CD4-positive, alpha-beta memory T cell (primary cell): ENCODE measurements at regions of chr12 and their contacts with region 1.

Region 1: GRCh38 chr12:53295070-53295890 is at the start of gene PFDN5:
- DNase-seq: peak; percentile 87 to 93 (median 91)
- H3K4me3 ChIP-seq: peak within 1 kb of the TSS; percentile 63 to 94
- H3K4me3 Mint-ChIP-seq: peak within 1 kb of the TSS; percentile 98 to 100 (median 99)
- H3K27ac ChIP-seq: peak within 1 kb of the TSS; percentile 81
- H3K27ac Mint-ChIP-seq: peak within 1 kb of the TSS; percentile 97 to 100 (median 99)
- H3K4me1 ChIP-seq: peaks cover 49% of the 10 kb centered on the region
- H3K4me1 Mint-ChIP-seq: peaks cover 23 to 59% (median 44%) of the 10 kb centered on the region in 4 donors
- H3K27me3 ChIP-seq: no peaks in the 10 kb centered on the region
- H3K27me3 Mint-ChIP-seq: no peaks in the 10 kb centered on the region
- total RNA-seq, gene PFDN5: 717 to 718 TPM

Region 2: GRCh38 chr12:53054112-53054833 is 241.0 kb before region 1 on chr12:
- CTCF ChIA-PET with region 1: no interaction called
- POLR2A ChIA-PET with region 1: no interaction called
- intact Hi-C with region 1: loop called (anchors 2 kb)
- DNase-seq: peak; percentile 94 to 96 (median 94)
- H3K4me3 ChIP-seq: peak overlapping the region; percentile 76 to 87
- H3K4me3 Mint-ChIP-seq: peak overlapping the region; percentile 88 to 95 (median 92)
- H3K27ac ChIP-seq: peak overlapping the region; percentile 62
- H3K27ac Mint-ChIP-seq: peak overlapping the region; percentile 80 to 98 (median 93)
- H3K4me1 ChIP-seq: peaks cover 9% of the 10 kb centered on the region
- H3K4me1 Mint-ChIP-seq: peaks cover 4 to 18% (median 12%) of the 10 kb centered on the region in 4 donors
- H3K27me3 ChIP-seq: no peaks in the 10 kb centered on the region
- H3K27me3 Mint-ChIP-seq: no peaks in the 10 kb centered on the region

Region 3: DNA sequence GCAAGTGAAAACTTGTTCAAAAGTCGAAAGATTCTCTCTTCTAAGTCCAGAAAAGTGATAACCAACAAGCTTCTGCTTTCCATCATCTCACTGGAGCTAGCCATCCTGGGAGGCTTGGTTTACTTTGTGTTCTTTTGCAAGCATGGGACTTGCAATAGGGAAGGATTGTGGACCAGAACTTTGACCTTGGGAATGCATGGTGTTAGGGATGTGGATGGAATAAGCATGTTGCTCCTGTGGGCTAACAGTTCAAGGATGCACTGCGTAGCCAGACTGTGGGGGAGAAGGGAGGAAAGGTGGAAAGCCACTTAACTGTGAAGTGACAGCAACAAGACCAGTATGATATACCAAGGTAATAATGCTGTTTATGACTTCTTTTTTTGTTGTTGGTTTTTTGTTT is 163.4 kb before region 1 on chr12:
- CTCF ChIA-PET with region 1: no interaction called
- POLR2A ChIA-PET with region 1: no interaction called
- intact Hi-C with region 1: no loop called
- DNase-seq: no peak
- H3K4me3 ChIP-seq: no peak overlapping the region
- H3K4me3 Mint-ChIP-seq: no peak overlapping the region
- H3K27ac ChIP-seq: no peak overlapping the region
- H3K27ac Mint-ChIP-seq: no peak overlapping the region
- H3K4me1 ChIP-seq: no peaks in the 10 kb centered on the region
- H3K4me1 Mint-ChIP-seq: peaks cover 0 to 4% (median 0%) of the 10 kb centered on the region in 4 donors
- H3K27me3 ChIP-seq: no peaks in the 10 kb centered on the region
- H3K27me3 Mint-ChIP-seq: peaks cover 3 to 4% of the 10 kb centered on the region in 2 donors

Region 4: DNA sequence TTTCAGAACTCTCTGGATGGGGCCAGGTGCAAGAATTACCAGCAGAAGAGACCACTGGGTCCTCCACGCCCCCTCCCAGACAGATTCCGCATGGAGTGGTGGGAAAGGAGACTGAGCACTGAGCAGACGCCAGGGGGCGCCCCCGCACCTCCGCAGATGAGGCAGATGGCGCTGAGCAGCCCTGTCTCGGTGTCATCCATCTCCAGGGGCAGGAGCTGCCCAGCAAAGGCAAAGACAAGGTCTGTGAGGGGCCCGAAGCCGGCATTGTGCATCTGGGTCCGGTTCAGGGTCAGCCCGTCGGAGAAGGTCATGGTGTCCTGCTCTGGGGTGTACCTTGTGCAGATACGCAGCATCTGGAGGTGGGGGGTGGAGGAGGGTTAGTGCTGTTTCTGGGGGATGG is 81.9 kb before region 1 on chr12:
- CTCF ChIA-PET with region 1: interaction called, 339 read pairs
- POLR2A ChIA-PET with region 1: interaction called, 50 read pairs
- intact Hi-C with region 1: no loop called
- DNase-seq: peak; percentile 77 to 84 (median 78)
- H3K4me3 ChIP-seq: no peak overlapping the region
- H3K4me3 Mint-ChIP-seq: peak overlapping the region in 1 of 8 donors; percentile 41
- H3K27ac ChIP-seq: peak overlapping the region; percentile 36
- H3K27ac Mint-ChIP-seq: peak overlapping the region; percentile 46 to 97 (median 87)
- H3K4me1 ChIP-seq: peaks cover 84% of the 10 kb centered on the region
- H3K4me1 Mint-ChIP-seq: peaks cover 45 to 81% (median 68%) of the 10 kb centered on the region in 4 donors
- H3K27me3 ChIP-seq: no peaks in the 10 kb centered on the region
- H3K27me3 Mint-ChIP-seq: no peaks in the 10 kb centered on the region

Region 5: GRCh38 chr12:53251477-53252348 is 43.6 kb before region 1 on chr12:
- CTCF ChIA-PET with region 1: interaction called, 29 read pairs
- POLR2A ChIA-PET with region 1: interaction called, 11 read pairs
- intact Hi-C with region 1: loop called (anchors 1 kb)
- DNase-seq: peak; percentile 67 to 78 (median 71)
- H3K4me3 ChIP-seq: peak overlapping the region; percentile 73 to 92
- H3K4me3 Mint-ChIP-seq: peak overlapping the region; percentile 96 to 100 (median 98)
- H3K27ac ChIP-seq: peak overlapping the region; percentile 83
- H3K27ac Mint-ChIP-seq: peak overlapping the region; percentile 96 to 99 (median 98)
- H3K4me1 ChIP-seq: peaks cover 46% of the 10 kb centered on the region
- H3K4me1 Mint-ChIP-seq: peaks cover 23 to 52% (median 41%) of the 10 kb centered on the region in 4 donors
- H3K27me3 ChIP-seq: no peaks in the 10 kb centered on the region
- H3K27me3 Mint-ChIP-seq: no peaks in the 10 kb centered on the region

Region 6: DNA sequence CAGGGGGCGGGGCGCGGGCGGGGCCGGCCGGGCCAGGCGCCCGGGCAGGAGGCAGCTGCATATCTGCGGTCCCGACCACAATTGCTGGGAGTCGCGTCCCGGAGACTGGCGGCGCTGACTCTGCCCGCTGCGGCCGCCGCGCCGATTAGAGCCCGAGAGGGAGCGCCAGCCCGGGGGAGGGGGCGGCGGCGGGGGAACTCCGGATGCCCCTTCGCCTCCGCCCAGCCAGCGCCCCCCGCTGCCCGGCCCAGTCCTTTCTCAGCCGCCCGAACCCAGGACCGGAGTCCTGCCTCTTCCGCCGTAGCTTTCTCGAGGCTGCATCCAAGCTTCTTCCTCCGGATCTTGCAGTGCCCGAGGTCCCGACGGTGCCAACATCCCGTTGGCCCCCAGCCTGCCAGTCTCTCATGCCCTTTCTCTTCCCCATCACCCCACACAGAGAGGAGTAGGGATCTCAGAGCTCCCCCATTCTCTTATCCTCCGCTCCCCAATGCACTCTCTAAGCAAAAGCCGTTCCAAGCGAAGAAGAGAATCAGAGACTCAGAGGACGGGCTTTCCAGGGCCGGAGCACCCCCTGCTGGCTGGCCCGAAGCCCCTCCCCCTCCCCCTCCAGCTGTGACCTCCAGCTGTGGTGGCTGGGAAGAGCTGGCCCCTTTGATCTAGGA is 49.7 kb after region 1 on chr12:
- CTCF ChIA-PET with region 1: interaction called, 28 read pairs
- POLR2A ChIA-PET with region 1: interaction called, 8 read pairs
- intact Hi-C with region 1: no loop called
- DNase-seq: peak; percentile 62 to 66 (median 65)
- H3K4me3 ChIP-seq: peak overlapping the region in 1 of 2 donors; percentile 73
- H3K4me3 Mint-ChIP-seq: peak overlapping the region; percentile 94 to 99 (median 98)
- H3K27ac ChIP-seq: peak overlapping the region; percentile 44
- H3K27ac Mint-ChIP-seq: peak overlapping the region; percentile 68 to 97 (median 94)
- H3K4me1 ChIP-seq: peaks cover 7% of the 10 kb centered on the region
- H3K4me1 Mint-ChIP-seq: peaks cover 11 to 18% (median 14%) of the 10 kb centered on the region in 4 donors
- H3K27me3 ChIP-seq: no peaks in the 10 kb centered on the region
- H3K27me3 Mint-ChIP-seq: no peaks in the 10 kb centered on the region

Region 7: DNA sequence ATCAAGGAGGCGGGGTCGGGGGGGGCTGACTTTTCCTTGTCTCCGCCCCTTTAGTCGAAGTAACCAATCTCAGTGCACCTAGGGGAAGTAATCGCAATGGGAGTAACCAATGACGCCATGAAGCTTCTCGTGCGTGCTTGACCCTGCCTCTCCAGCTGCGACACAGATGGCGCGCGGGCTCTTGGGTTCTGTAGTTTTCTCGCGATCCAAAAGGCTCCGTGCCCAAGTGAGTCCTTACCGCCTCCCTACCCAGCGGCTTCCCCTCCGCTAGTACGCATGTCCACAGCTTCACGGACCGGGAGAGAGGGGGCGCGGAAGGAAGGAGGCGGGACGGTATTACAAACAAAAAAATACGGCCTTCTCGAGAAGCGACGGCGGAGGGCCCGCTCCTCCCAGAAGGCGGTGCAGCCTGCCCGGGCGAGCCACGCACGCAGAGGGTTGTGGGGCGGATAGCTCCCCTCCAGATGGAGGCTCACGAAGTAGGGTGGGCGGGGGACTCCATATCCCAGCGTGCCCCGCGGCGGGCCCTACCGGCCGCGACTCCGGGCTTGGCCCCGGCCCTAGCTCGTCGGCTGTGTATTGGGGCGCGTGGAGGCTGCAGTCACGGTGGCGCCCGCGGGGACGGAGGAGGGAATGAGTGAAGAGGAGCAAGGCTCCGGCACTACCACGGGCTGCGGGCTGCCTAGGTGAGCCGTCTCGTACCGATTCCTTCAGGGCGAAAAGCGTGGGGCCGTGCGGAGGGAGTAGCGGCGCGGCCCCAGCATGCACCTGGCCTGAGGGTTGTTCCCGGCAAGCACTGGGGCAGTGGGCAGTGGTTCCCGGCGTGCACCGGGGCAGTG is 205.7 kb after region 1 on chr12 and contains the start of gene TARBP2:
- CTCF ChIA-PET with region 1: no interaction called
- POLR2A ChIA-PET with region 1: interaction called, 25 read pairs
- intact Hi-C with region 1: loop called (anchors 1 kb)
- DNase-seq: peak; percentile 98 to 99 (median 99)
- H3K4me3 ChIP-seq: peak within 1 kb of the TSS; percentile 79 to 91
- H3K4me3 Mint-ChIP-seq: peak within 1 kb of the TSS; percentile 89 to 98 (median 92)
- H3K27ac ChIP-seq: peak within 1 kb of the TSS; percentile 98
- H3K27ac Mint-ChIP-seq: peak within 1 kb of the TSS; percentile 92 to 100 (median 99)
- H3K4me1 ChIP-seq: peaks cover 41% of the 10 kb centered on the region
- H3K4me1 Mint-ChIP-seq: peaks cover 17 to 63% (median 45%) of the 10 kb centered on the region in 4 donors
- H3K27me3 ChIP-seq: no peaks in the 10 kb centered on the region
- H3K27me3 Mint-ChIP-seq: no peaks in the 10 kb centered on the region
- total RNA-seq, gene TARBP2: 26.9 to 37.0 TPM

Region 8: GRCh38 chr12:53518381-53518780 is 223.1 kb after region 1 on chr12:
- CTCF ChIA-PET with region 1: no interaction called
- POLR2A ChIA-PET with region 1: no interaction called
- intact Hi-C with region 1: no loop called
- DNase-seq: no peak
- H3K4me3 ChIP-seq: no peak overlapping the region
- H3K4me3 Mint-ChIP-seq: no peak overlapping the region
- H3K27ac ChIP-seq: no peak overlapping the region
- H3K27ac Mint-ChIP-seq: no peak overlapping the region
- H3K4me1 ChIP-seq: no peaks in the 10 kb centered on the region
- H3K4me1 Mint-ChIP-seq: no peaks in the 10 kb centered on the region
- H3K27me3 ChIP-seq: no peaks in the 10 kb centered on the region
- H3K27me3 Mint-ChIP-seq: no peaks in the 10 kb centered on the region